GM12878 (cell line): ENCODE measurements at regions of chr3 and their contacts with region 1.

Region 1: GRCh38 chr3:52220380-52221026 is 4.9 kb downstream of the TLR9 start:
- DNase-seq: no peak
- ATAC-seq: peak; percentile 95
- H3K4me3 ChIP-seq: no peak overlapping the region
- H3K27ac ChIP-seq: no peak overlapping the region
- H3K4me1 ChIP-seq: peaks cover 25% of the 10 kb centered on the region
- H3K27me3 ChIP-seq: no peaks in the 10 kb centered on the region
- CTCF ChIP-seq: peak; percentile 92 to 96 (median 93)
- EP300 ChIP-seq: no peak
- POLR2A ChIP-seq: no peak
- RAD21 ChIP-seq: peak; percentile 83

Region 2: DNA sequence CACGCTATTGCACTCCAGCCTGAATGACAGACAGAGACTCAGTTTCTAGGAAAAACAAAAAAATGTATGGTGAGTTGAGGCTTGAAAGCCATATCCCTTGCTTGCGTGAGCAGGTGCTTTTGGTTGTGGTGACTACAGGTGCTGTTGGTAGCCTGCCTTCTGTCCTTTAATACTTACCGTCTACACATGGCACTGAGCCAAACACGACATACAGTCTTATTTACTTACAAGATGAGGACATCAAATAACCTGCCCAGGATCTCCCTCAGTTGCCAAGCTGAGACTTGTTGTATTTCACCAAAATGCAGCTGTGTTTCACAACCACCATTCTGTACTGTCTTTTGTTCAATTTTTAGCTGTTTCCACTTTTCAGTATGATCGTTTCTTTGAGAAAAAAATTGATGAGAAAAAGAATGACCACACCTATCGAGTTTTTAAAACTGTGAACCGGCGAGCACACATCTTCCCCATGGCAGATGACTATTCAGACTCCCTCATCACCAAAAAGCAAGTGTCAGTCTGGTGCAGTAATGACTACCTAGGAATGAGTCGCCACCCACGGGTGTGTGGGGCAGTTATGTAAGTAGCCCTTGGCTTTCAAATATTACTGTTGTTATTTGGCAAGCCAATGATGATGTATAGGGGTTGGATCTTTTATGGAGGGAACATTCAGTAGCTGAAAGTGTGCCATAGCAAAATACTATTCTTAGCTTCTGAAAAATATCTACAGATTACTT is 16.0 kb before region 1 on chr3:
- CTCF ChIA-PET with region 1: interaction called, 59 read pairs
- POLR2A ChIA-PET with region 1: interaction called, 10 read pairs
- RAD21 ChIA-PET with region 1: interaction called, 22 read pairs
- SMC1A ChIA-PET with region 1: interaction called, 28 read pairs
- in situ Hi-C with region 1: no loop called
- intact Hi-C with region 1: no loop called
- DNase-seq: no peak
- ATAC-seq: peak; percentile 16; the same call in 1 of the 3 replicates
- H3K4me3 ChIP-seq: peak overlapping the region; percentile 3; the same call in 1 of the 2 replicates
- H3K27ac ChIP-seq: no peak overlapping the region
- H3K4me1 ChIP-seq: peaks cover 21% of the 10 kb centered on the region; the same call in 1 of the 2 replicates
- H3K27me3 ChIP-seq: no peaks in the 10 kb centered on the region
- CTCF ChIP-seq: no peak
- EP300 ChIP-seq: no peak
- POLR2A ChIP-seq: no peak
- RAD21 ChIP-seq: no peak

Region 3: DNA sequence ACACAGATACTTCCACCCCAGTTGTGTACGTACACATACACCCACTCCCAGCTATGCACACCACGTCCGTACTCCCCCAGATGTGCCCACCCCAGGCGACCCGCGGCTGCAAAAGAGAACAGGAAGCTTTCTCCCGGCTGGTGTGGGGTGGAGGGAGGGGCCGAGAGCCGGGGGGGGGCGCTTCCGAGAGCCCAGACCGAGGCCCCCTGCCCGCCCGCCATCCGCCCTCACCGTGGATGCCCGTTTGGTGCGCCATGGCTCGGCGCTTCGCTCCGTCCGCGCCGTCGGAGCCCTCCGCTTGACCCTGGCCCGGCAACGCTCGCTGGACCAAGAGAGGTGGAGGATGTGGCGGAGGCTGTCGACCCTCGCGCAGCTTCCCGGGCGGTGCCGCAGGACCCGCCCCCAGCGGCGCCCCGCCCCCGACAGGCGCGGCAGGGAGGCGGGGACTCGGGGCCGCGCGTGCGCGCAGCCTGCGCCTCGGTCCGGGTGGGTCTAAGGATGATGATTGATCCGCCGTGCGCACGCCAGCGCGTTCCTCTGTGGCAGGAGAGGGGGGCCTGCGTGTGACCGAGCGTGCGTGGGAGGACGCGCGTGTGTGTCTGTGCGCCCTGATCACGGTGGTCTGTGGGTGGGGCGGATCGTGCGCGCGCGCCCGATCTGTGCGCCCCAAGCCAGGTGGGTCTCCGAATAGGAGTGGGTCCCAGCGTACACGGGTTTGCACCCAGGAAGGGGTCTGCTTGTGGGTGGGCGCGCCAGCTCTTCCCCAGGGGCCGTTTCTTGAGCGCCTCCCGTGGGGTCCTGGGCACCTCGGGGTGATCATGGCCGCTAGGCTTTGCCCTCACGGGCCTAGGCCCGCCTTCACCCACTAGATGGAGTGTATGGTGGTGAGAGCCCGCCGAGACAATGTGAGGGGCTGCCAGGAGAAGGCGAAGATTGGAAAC is 18.5 kb after region 1 on chr3 and contains the start of gene TWF2:
- CTCF ChIA-PET with region 1: interaction called, 26 read pairs
- POLR2A ChIA-PET with region 1: interaction called, 43 read pairs
- RAD21 ChIA-PET with region 1: interaction called, 13 read pairs
- SMC1A ChIA-PET with region 1: interaction called, 25 read pairs
- in situ Hi-C with region 1: no loop called
- intact Hi-C with region 1: no loop called
- DNase-seq: no peak
- ATAC-seq: peak; percentile 87
- H3K4me3 ChIP-seq: peak within 1 kb of the TSS; percentile 93
- H3K27ac ChIP-seq: peak within 1 kb of the TSS; percentile 88
- H3K4me1 ChIP-seq: peaks cover 40% of the 10 kb centered on the region
- H3K27me3 ChIP-seq: no peaks in the 10 kb centered on the region
- CTCF ChIP-seq: peak; percentile 43 to 49 (median 43)
- EP300 ChIP-seq: no peak
- POLR2A ChIP-seq: peak; percentile 91
- RAD21 ChIP-seq: peak; percentile 30; the same call in 1 of the 2 replicates
- polyA plus RNA-seq, gene TWF2: 0.16 to 3.4 TPM

Region 4: DNA sequence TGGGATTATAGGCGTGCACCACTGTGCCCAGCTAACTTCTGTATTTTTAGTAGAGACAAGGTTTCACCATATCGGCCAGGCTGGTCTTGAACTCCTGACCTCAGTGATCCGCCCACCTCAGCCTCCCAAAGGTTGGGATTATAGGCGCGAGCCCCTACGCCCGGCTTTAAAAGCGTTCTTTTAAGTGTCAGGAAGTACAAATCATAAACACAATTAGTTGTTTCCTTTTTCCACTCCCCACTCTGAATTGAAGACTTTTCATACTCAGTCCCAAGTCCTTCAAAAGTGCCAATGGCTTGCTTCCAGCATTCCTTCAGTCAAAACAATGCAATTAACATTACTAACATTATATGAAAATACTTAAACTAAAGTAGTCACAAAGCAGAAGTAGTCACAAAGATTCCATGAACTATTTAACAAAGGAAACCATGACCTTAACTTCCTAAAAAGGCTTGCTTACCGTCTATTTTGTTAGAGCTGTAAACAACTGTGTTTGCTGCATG is 49.8 kb after region 1 on chr3:
- CTCF ChIA-PET with region 1: interaction called, 10 read pairs
- POLR2A ChIA-PET with region 1: interaction called, 6 read pairs
- RAD21 ChIA-PET with region 1: interaction called, 11 read pairs
- SMC1A ChIA-PET with region 1: interaction called, 6 read pairs
- in situ Hi-C with region 1: no loop called
- intact Hi-C with region 1: no loop called
- DNase-seq: no peak
- ATAC-seq: no peak
- H3K4me3 ChIP-seq: peak overlapping the region; percentile 0; the same call in 1 of the 2 replicates
- H3K27ac ChIP-seq: no peak overlapping the region; the same call in 1 of the 2 replicates
- H3K4me1 ChIP-seq: peaks cover 10% of the 10 kb centered on the region
- H3K27me3 ChIP-seq: no peaks in the 10 kb centered on the region
- CTCF ChIP-seq: no peak
- EP300 ChIP-seq: no peak
- POLR2A ChIP-seq: no peak
- RAD21 ChIP-seq: no peak

Region 5: DNA sequence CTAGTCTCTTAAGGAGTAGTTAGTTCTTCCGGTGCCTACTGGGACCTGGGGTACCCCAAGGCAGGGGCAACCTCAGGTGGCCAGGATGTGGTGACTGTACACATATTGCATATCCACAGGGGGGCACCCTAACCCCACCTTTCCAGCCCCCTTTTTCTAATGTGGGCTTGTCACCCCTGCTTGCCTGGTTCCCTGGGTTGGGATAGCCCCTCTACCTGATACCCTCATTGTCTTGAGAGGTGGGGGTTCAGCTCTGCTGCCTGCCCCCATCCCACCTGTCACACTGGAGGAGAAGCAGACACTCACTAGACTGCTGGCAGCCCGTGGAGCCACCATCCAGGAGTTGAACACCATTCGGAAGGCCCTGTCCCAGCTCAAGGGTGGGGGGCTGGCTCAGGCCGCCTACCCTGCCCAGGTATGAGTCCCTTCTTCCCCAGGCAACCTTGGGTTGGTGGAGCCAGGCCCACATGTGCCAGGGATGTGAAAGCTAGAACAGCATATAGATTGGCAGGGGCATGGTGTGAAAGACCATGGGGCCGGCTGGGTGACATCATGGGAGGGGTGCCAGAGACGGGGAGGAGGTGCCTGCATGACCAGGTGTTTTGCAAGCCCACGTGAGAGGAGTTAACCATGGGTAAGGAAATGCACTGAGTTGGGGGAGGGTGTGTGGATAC is 71.1 kb after region 1 on chr3:
- CTCF ChIA-PET with region 1: interaction called, 9 read pairs
- POLR2A ChIA-PET with region 1: interaction called, 6 read pairs
- RAD21 ChIA-PET with region 1: interaction called, 7 read pairs
- SMC1A ChIA-PET with region 1: interaction called, 10 read pairs
- in situ Hi-C with region 1: no loop called
- intact Hi-C with region 1: no loop called
- DNase-seq: no peak
- ATAC-seq: peak; percentile 53
- H3K4me3 ChIP-seq: no peak overlapping the region
- H3K27ac ChIP-seq: no peak overlapping the region
- H3K4me1 ChIP-seq: peaks cover 11% of the 10 kb centered on the region
- H3K27me3 ChIP-seq: no peaks in the 10 kb centered on the region
- CTCF ChIP-seq: peak; percentile 63 to 91 (median 67)
- EP300 ChIP-seq: no peak
- POLR2A ChIP-seq: no peak
- RAD21 ChIP-seq: peak; percentile 93

Region 6: GRCh38 chr3:52444860-52445793 is 224.6 kb after region 1 on chr3 and contains the start of gene SEMA3G:
- CTCF ChIA-PET with region 1: interaction called, 14 read pairs
- POLR2A ChIA-PET with region 1: no interaction called
- RAD21 ChIA-PET with region 1: interaction called, 6 read pairs
- SMC1A ChIA-PET with region 1: interaction called, 4 read pairs
- in situ Hi-C with region 1: no loop called
- intact Hi-C with region 1: loop called (anchors 5 kb)
- DNase-seq: no peak
- ATAC-seq: peak; percentile 98
- H3K4me3 ChIP-seq: no peak within 1 kb of the TSS
- H3K27ac ChIP-seq: no peak within 1 kb of the TSS
- H3K4me1 ChIP-seq: no peaks in the 10 kb centered on the region
- H3K27me3 ChIP-seq: no peaks in the 10 kb centered on the region
- CTCF ChIP-seq: peak; percentile 30 to 73 (median 52)
- EP300 ChIP-seq: no peak
- POLR2A ChIP-seq: peak; percentile 71
- RAD21 ChIP-seq: 0 out of 2 replicates have a peak, but pooled peaks have one; percentile 14
- polyA plus RNA-seq, gene SEMA3G: not detected

Region 7: DNA sequence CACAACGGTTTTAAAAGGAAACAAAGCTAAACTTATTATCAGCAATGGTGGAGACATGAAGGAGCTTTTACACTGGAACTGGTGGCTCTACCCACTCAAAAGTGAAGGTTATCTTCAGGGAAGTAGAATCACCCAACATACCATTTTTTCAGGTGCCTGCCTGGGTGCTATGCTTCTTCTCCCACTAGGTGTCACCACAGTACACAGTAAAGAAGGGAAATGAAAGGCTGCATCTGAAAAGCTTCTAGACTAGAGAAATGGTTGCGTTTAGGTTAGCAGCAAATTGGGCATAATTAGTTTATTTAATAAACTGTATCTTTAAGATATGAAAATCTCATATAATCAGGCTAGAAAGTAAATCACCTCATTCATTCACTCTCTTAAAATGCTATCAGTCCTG is 1718.1 kb after region 1 on chr3:
- CTCF ChIA-PET with region 1: no interaction called
- POLR2A ChIA-PET with region 1: no interaction called
- RAD21 ChIA-PET with region 1: no interaction called
- SMC1A ChIA-PET with region 1: no interaction called
- in situ Hi-C with region 1: no loop called
- intact Hi-C with region 1: no loop called
- DNase-seq: no peak
- ATAC-seq: peak; percentile 87
- H3K4me3 ChIP-seq: no peak overlapping the region
- H3K27ac ChIP-seq: no peak overlapping the region
- H3K4me1 ChIP-seq: no peaks in the 10 kb centered on the region
- H3K27me3 ChIP-seq: no peaks in the 10 kb centered on the region; a peak in 1 of 4 replicates
- CTCF ChIP-seq: peak; percentile 74 to 81 (median 78)
- EP300 ChIP-seq: no peak
- POLR2A ChIP-seq: no peak
- RAD21 ChIP-seq: peak; percentile 82